Activated T-helper 1 cell treated with anti-CD3 and anti-CD28 coated beads, Interleukin-12 subunit alpha, Interleukin-12 subunit beta, Interleukin-2, Interleukin-4 antibody, amounts not matched to agents 30 ng/mL and 10 ng/mL and 1 ng/mL, durations not matched to agents 14 hours and 24 hours and 36 hours (primary cell): ENCODE measurements at regions of chr2 and their contacts with region 1.

Region 1: GRCh38 chr2:46364797-46365457 is 67.7 kb downstream of the EPAS1 start:
- DNase-seq: no peak
- H3K4me3 Mint-ChIP-seq: no peak overlapping the region
- H3K27ac Mint-ChIP-seq: no peak overlapping the region
- H3K4me1 Mint-ChIP-seq: peaks cover 49% of the 10 kb centered on the region
- H3K27me3 Mint-ChIP-seq: peaks cover 6% of the 10 kb centered on the region

Region 2: GRCh38 chr2:45993476-45993991 is 371.4 kb before region 1 on chr2:
- intact Hi-C with region 1: loop called (anchors 1 kb)
- DNase-seq: peak; percentile 44
- H3K4me3 Mint-ChIP-seq: no peak overlapping the region
- H3K27ac Mint-ChIP-seq: no peak overlapping the region
- H3K4me1 Mint-ChIP-seq: peaks cover 5% of the 10 kb centered on the region
- H3K27me3 Mint-ChIP-seq: peaks cover 3% of the 10 kb centered on the region

Region 3: DNA sequence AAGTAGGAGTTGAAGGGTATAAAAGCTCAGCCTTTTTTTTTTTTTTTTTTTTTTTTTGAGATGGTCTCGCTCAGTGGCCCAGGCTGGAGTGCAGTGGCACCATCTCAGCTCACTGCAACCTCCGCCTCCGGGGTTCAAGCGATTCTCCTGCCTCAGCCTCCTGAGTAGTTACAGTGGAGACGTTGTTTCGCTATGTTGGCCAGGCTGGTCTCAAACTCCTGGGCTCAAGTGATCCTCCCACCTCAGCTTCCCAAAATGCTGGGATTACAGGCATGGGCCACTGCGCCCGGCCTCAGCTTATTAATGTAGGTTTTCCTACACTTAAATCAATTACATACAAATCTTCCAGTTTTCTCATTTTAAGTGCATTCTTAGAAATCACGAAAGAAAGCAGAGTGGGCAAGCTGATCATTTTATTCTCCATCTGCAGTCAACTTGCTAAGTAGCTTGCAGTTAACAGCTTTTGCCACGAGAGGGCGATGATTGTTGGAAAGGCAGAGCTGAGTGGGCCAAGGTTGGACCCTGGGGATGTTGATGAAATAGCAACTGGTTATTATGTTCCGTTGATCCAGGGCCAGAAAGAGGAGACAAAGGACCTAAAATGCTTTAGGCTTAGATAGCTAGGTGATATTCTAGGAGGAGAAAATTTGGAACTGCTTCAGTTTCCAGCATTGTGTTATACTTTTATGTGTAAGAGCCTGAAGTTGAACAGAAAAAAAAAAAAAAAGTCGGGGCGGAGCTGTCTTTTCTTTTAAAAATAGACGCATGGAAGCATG is 302.1 kb before region 1 on chr2:
- intact Hi-C with region 1: loop called (anchors 1 kb)
- DNase-seq: peak; percentile 46
- H3K4me3 Mint-ChIP-seq: no peak overlapping the region
- H3K27ac Mint-ChIP-seq: no peak overlapping the region
- H3K4me1 Mint-ChIP-seq: peaks cover 18% of the 10 kb centered on the region
- H3K27me3 Mint-ChIP-seq: no peaks in the 10 kb centered on the region

Region 4: GRCh38 chr2:46351750-46352138 is 13.2 kb before region 1 on chr2:
- intact Hi-C with region 1: loop called (anchors 1 kb)
- DNase-seq: peak; percentile 69
- H3K4me3 Mint-ChIP-seq: peak overlapping the region; percentile 80
- H3K27ac Mint-ChIP-seq: peak overlapping the region; percentile 95
- H3K4me1 Mint-ChIP-seq: peaks cover 84% of the 10 kb centered on the region
- H3K27me3 Mint-ChIP-seq: no peaks in the 10 kb centered on the region

Region 5: GRCh38 chr2:47250630-47251403 is 885.9 kb after region 1 on chr2:
- intact Hi-C with region 1: no loop called
- DNase-seq: no peak
- H3K4me3 Mint-ChIP-seq: no peak overlapping the region
- H3K27ac Mint-ChIP-seq: no peak overlapping the region
- H3K4me1 Mint-ChIP-seq: no peaks in the 10 kb centered on the region
- H3K27me3 Mint-ChIP-seq: peaks cover 2% of the 10 kb centered on the region